ENCODE measurements at regions of chr21 and their contacts with region 1.

Region 1: DNA sequence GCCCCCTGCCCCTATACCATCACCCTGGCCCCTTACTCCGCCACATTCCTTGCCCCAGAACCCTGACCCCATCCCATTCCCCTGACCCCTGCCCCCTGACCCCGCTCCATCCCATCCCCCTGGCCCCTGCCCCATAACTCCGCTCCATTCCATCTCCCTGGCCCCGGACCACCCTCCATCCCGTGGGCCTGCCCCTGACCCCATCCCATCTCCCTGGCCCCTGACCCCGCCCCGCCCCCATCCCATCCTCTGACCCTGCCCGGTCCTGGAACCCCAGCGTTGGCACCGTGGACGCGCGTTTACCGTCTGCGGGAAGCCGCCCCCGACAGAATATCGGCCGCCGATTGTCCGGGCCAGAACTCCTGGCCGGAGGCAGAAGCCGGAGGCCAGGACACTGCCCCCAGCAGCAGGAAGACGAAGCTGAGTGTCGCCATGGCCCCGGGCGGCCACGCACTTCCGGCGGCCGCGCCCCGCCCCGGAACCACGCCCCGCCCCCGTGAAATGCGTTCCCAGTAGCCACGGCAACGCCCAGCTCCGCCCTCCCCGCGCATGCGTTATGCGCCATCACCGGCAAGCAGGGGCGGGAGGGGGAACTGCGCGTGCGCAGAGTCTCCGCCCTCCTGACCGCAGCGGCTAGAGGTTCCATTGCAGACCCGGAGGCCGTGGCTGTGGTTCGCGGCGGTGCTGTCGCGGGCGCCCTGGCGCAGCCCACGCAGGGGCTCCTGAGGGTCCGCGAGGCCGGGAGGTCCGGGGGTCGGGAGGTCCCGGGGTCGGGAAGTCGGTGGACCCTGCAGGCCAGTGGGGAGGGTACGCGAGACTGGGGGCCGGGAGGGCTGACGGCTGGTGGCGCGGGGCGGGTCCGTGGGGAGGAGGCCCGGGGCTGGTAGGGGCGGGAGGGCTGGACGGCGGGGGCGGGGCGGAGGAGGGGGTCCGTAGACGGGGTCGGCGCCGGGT is at the start of gene POFUT2:
- DNase-seq: peak; percentile 97 to 99 (median 98)
- ATAC-seq: peak; percentile 92
- H3K4me3 ChIP-seq: peak within 1 kb of the TSS; percentile 86 to 91
- H3K27ac ChIP-seq: peak within 1 kb of the TSS; percentile 42 to 85 (median 72)
- H3K4me1 ChIP-seq: peaks cover 34% of the 10 kb centered on the region
- H3K27me3 ChIP-seq: no peaks in the 10 kb centered on the region
- CTCF ChIP-seq: peak in 1 of 7 experiments; percentile 14
- POLR2A ChIP-seq: peak; percentile 74 to 87 (median 83)
- total RNA-seq, gene POFUT2: 16.3 to 46.1 TPM

Region 2: DNA sequence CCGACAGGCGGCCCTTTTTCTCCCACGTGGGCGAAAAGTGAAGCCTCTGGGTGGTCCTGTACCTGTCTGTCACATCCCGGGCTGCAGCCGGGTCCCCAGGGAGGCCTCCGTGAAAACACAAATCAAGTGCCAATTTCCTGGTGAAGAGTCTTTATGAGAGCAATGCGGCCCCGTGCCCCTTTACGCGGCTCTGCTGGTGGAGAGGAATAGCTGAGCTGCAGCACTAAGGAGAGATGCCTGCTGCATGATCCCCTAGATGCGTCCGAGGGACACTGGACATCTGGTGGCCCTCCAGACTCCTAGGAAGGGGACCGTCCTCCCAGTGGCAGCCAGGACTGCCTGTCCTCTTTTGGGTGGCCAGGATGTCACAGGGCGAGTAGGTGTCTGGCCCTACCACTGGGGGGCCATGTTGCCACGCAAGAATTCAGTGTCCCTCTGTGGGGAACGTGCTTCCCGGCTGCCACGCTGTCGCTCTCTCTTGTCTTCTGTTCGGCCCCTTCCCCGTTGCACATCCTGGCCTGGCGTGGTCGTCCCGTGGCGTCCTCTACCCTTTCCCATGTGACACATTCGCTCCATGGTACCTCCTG is 156.0 kb after region 1 on chr21:
- intact Hi-C with region 1: loop called (anchors 10 kb)
- DNase-seq: no peak
- ATAC-seq: no peak
- H3K4me3 ChIP-seq: no peak overlapping the region
- H3K27ac ChIP-seq: no peak overlapping the region
- H3K4me1 ChIP-seq: peaks cover 11% of the 10 kb centered on the region
- H3K27me3 ChIP-seq: no peaks in the 10 kb centered on the region
- CTCF ChIP-seq: no peak
- POLR2A ChIP-seq: no peak

Region 3: DNA sequence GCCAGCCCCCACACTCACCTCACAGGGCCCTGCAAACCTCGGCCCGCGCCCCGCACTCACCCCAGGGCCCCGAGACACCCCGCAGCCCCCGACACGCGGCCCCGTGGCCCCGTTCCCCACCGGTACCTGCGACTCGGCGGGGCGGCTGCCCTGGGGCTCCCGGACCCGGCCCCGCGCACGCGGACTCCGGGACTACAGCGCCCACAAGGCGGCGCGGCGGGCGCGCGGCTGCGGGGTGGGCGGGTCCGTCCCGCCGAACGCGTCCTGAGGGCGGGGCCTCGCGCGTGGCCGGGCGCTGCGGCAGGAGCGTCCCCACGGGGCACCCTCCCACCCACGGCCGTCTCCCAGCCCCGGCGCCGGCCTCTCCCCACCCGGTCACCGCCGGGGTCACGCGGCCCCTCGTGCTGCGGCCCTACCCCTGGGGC is 254.5 kb after region 1 on chr21 and contains the start of gene SLC19A1:
- intact Hi-C with region 1: loop called (anchors 10 kb)
- DNase-seq: peak; percentile 60 to 73 (median 66)
- ATAC-seq: peak; percentile 86
- H3K4me3 ChIP-seq: peak within 1 kb of the TSS; percentile 35 to 58
- H3K27ac ChIP-seq: peak within 1 kb of the TSS in 2 of 4 donors; percentile 47 to 49
- H3K4me1 ChIP-seq: peaks cover 14% of the 10 kb centered on the region
- H3K27me3 ChIP-seq: no peaks in the 10 kb centered on the region
- CTCF ChIP-seq: peak in 5 of 7 experiments; percentile 9 to 67 (median 62)
- POLR2A ChIP-seq: no peak
- total RNA-seq, gene SLC19A1: 2.6 to 7.0 TPM